ENCODE measurements at regions of chr1 and their contacts with region 1.

Region 1: GRCh38 chr1:154747740-154748404 is 122.2 kb downstream of the KCNN3 start:
- DNase-seq: peak; percentile 78
- H3K4me3 Mint-ChIP-seq: peak overlapping the region; percentile 79
- H3K27ac Mint-ChIP-seq: peak overlapping the region; percentile 96
- H3K4me1 Mint-ChIP-seq: peaks cover 81% of the 10 kb centered on the region
- H3K27me3 Mint-ChIP-seq: peaks cover 55% of the 10 kb centered on the region

Region 2: GRCh38 chr1:154567386-154568156 is 180.3 kb before region 1 on chr1 and contains the start of gene CHRNB2:
- CTCF ChIA-PET with region 1: no interaction called
- DNase-seq: peak; percentile 84
- H3K4me3 Mint-ChIP-seq: no peak within 1 kb of the TSS
- H3K27ac Mint-ChIP-seq: no peak within 1 kb of the TSS
- H3K4me1 Mint-ChIP-seq: peaks cover 8% of the 10 kb centered on the region
- H3K27me3 Mint-ChIP-seq: peaks cover 65% of the 10 kb centered on the region

Region 3: DNA sequence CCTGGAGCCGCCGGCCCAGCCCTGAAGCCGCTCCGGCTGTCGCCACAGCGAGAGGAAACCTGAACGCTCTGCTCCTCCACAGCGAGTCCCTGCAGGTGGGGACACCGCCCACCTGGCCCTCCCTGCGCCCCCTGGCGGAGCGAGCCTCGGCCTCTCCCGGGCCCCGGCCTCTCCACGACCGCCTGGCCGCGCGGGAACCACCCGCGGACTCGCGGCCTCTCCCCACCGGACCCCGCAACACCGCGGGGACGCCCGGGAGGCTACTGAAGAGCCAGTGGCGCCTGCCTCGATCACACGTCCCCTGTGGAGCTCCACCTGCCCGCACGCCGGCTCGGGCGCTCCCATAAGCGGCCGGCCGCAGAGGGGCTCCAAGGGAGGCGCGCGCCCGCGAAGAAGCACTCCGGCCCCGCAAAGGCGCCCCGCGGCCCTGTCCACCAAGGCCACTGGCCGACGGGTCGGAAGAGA is 12.6 kb after region 1 on chr1:
- CTCF ChIA-PET with region 1: interaction called, 12 read pairs
- DNase-seq: peak; percentile 89
- H3K4me3 Mint-ChIP-seq: peak overlapping the region; percentile 49
- H3K27ac Mint-ChIP-seq: peak overlapping the region; percentile 90
- H3K4me1 Mint-ChIP-seq: peaks cover 48% of the 10 kb centered on the region
- H3K27me3 Mint-ChIP-seq: peaks cover 12% of the 10 kb centered on the region

Measured in activated naive CD4-positive, alpha-beta T cell treated with anti-CD3 and anti-CD28 coated beads, Interleukin-2, amount 10 ng/mL, durations not matched to agents 7 days and 5 days (primary cell).